Ovary (tissue), 10 donors: ENCODE measurements at regions of chrX and their contacts with region 1.

Region 1: DNA sequence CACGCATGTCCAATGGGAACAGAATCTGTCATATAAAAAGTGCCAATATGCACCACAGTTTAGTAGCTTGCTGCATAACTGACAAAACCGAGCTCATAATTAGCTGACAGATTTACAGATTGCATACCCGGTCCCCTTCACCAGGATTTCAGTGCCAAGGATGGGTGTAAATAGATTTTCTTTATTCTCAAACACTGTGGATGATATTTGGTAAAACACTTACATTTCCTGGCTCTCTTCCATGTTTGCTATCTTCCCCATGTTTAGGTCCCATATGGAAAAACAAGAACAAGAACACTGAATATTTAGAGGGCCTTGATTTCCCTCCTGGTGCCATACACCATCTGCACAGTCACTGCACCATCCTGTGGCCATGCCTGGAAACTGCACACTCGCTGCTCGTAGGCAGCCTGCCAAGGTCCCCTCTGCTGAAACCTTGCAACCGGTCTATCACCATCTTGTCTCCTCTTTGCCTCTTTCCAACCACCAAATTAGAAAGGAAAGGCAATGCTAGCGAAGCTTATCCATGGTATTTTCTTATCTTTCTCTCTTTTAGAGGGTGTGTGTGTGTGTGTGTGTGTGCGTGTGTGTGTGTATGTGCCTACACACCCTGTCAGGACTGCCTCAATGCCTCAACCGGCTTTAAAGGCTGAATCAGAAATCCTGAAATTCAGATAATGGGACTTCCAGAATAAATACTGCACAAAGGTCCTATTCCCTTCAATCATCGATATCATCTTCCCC is 124.2 kb upstream of the MBNL3 start:
- DNase-seq: peak; percentile 15 to 59 (median 26)
- H3K4me3 ChIP-seq: no peak overlapping the region
- H3K27ac ChIP-seq: no peak overlapping the region
- H3K4me1 ChIP-seq: no peaks in the 10 kb centered on the region
- H3K27me3 ChIP-seq: no peaks in the 10 kb centered on the region
- CTCF ChIP-seq: no peak
- EP300 ChIP-seq: no peak
- POLR2A ChIP-seq: no peak

Region 2: DNA sequence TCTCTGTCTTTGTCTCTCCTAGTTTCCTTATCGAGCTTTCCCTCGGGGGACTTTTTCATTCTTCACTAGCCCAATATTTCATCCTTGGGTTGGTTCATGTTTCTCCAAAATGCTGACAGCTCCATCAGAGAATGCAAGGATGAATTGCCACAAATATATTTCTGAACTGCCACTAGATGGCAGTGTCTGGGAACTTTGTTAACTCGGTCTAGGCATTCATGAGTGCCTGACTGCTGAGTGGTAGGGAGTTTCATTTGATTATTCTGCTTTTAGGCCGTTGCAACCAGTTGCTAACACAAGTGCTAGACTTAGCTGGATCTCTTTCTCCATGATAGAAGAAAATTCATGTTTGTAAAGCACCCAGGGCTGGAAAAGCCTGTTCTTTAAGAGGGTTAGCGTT is 320.2 kb before region 1 on chrX:
- intact Hi-C with region 1: loop called in 2 of 4 experiments (anchors 5 kb)
- DNase-seq: peak in 2 of 5 donors; percentile 20 to 28
- H3K4me3 ChIP-seq: no peak overlapping the region
- H3K27ac ChIP-seq: no peak overlapping the region
- H3K4me1 ChIP-seq: no peaks in the 10 kb centered on the region
- H3K27me3 ChIP-seq: no peaks in the 10 kb centered on the region
- CTCF ChIP-seq: peak in 2 of 3 donors; percentile 44 to 56
- EP300 ChIP-seq: no peak
- POLR2A ChIP-seq: no peak